ENCODE measurements at regions of chr4 and their contacts with region 1.

Region 1: GRCh38 chr4:83639849-83640493 is 104.1 kb downstream of the GPAT3 start:
- DNase-seq: peak; percentile 45 to 64 (median 60)
- H3K4me3 ChIP-seq: no peak overlapping the region
- H3K4me3 Mint-ChIP-seq: no peak overlapping the region
- H3K27ac ChIP-seq: no peak overlapping the region
- H3K27ac Mint-ChIP-seq: no peak overlapping the region
- H3K4me1 ChIP-seq: no peaks in the 10 kb centered on the region
- H3K4me1 Mint-ChIP-seq: peaks cover 0 to 3% (median 2%) of the 10 kb centered on the region in 4 donors
- H3K27me3 ChIP-seq: no peaks in the 10 kb centered on the region
- H3K27me3 Mint-ChIP-seq: peaks cover 6 to 8% of the 10 kb centered on the region in 2 donors

Region 2: DNA sequence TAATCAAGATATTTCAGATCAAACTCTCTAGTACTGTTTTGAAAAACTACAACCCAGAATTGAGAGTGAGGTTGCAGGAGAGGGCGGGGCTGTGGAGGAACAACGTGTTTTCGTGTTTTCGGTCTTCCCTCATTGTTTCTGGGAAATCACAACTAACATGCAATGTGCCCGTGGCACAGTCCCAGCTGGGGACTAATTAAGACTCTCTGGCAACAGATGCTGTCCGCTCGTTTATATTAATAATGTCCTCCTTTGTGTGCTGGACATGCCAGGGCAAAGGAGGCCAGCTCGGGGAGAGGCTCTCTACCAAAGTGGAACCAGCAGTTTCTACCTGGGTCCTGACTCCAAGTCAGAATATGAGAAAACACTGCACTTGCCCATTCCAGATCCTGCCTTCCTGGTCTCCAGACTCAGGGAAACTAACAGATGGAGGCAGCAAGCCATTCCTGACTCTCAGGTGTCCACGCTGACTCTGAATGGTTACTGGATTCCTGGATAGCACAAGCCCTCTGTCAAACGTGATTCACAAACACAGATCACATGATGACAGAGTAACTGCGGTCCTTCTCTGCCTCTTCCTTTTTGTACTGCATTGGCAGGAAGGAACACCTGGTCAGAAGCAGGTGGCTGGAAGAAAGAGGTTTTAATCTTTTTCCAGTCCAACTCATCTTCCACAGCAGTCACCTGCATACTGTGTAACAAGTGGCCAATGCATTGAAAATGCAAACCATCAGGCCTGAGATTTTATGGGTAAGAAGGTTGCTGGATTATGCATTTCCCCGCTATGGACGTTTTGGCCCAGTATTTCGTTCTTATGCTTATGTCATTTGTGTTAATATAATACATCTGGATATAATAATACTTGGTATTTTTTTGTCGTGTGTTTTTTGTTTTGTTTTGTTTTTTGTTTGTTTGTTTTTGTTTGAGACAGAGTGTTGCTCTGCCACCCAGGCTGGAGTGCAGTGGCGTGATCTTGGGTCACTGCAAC is 420.3 kb before region 1 on chr4:
- CTCF ChIA-PET with region 1: no interaction called
- POLR2A ChIA-PET with region 1: no interaction called
- intact Hi-C with region 1: no loop called
- DNase-seq: peak; percentile 47 to 56 (median 50)
- H3K4me3 ChIP-seq: peak overlapping the region in 1 of 2 donors; percentile 54
- H3K4me3 Mint-ChIP-seq: peak overlapping the region; percentile 63 to 88 (median 78)
- H3K27ac ChIP-seq: peak overlapping the region; percentile 64
- H3K27ac Mint-ChIP-seq: peak overlapping the region; percentile 77 to 94 (median 91)
- H3K4me1 ChIP-seq: peaks cover 81% of the 10 kb centered on the region
- H3K4me1 Mint-ChIP-seq: peaks cover 49 to 78% (median 64%) of the 10 kb centered on the region in 4 donors
- H3K27me3 ChIP-seq: no peaks in the 10 kb centered on the region
- H3K27me3 Mint-ChIP-seq: no peaks in the 10 kb centered on the region

Region 3: GRCh38 chr4:83362492-83363329 is 277.3 kb before region 1 on chr4:
- CTCF ChIA-PET with region 1: interaction called, 4 read pairs
- POLR2A ChIA-PET with region 1: no interaction called
- intact Hi-C with region 1: loop called (anchors 2 kb)
- DNase-seq: no peak
- H3K4me3 ChIP-seq: no peak overlapping the region
- H3K4me3 Mint-ChIP-seq: no peak overlapping the region
- H3K27ac ChIP-seq: no peak overlapping the region
- H3K27ac Mint-ChIP-seq: no peak overlapping the region
- H3K4me1 ChIP-seq: no peaks in the 10 kb centered on the region
- H3K4me1 Mint-ChIP-seq: no peaks in the 10 kb centered on the region
- H3K27me3 ChIP-seq: no peaks in the 10 kb centered on the region
- H3K27me3 Mint-ChIP-seq: peaks cover 0 to 2% of the 10 kb centered on the region in 2 donors

Region 4: GRCh38 chr4:83498187-83498586 is 141.8 kb before region 1 on chr4:
- CTCF ChIA-PET with region 1: interaction called, 96 read pairs
- POLR2A ChIA-PET with region 1: no interaction called
- intact Hi-C with region 1: no loop called
- DNase-seq: no peak
- H3K4me3 ChIP-seq: no peak overlapping the region
- H3K4me3 Mint-ChIP-seq: no peak overlapping the region
- H3K27ac ChIP-seq: no peak overlapping the region
- H3K27ac Mint-ChIP-seq: peak overlapping the region in 1 of 7 donors; percentile 69
- H3K4me1 ChIP-seq: no peaks in the 10 kb centered on the region
- H3K4me1 Mint-ChIP-seq: no peaks in the 10 kb centered on the region
- H3K27me3 ChIP-seq: no peaks in the 10 kb centered on the region
- H3K27me3 Mint-ChIP-seq: peaks cover 1 to 2% of the 10 kb centered on the region in 2 donors

Region 5: DNA sequence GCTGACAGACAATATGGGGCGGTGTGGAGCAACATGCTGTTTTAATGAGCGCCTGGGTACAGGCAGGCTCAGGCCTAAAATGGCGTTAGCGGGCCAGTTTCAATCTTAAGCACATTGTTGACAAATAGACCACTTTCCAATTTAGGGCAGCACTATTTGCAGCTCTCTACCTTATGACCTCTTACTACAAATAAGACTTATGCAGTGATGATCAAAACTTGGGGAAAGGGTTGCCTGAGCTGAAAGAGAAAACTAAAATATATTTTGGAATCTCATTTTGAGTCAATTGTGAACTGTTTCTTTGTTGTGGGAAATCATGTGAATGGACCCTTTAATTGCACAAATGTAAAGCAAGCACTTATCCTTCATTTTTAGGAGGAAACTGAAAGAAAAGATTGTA is 129.5 kb before region 1 on chr4:
- CTCF ChIA-PET with region 1: interaction called, 93 read pairs
- POLR2A ChIA-PET with region 1: no interaction called
- intact Hi-C with region 1: loop called (anchors 1 kb)
- DNase-seq: no peak
- H3K4me3 ChIP-seq: no peak overlapping the region
- H3K4me3 Mint-ChIP-seq: no peak overlapping the region
- H3K27ac ChIP-seq: no peak overlapping the region
- H3K27ac Mint-ChIP-seq: no peak overlapping the region
- H3K4me1 ChIP-seq: no peaks in the 10 kb centered on the region
- H3K4me1 Mint-ChIP-seq: peaks cover 0 to 3% (median 1%) of the 10 kb centered on the region in 4 donors
- H3K27me3 ChIP-seq: no peaks in the 10 kb centered on the region
- H3K27me3 Mint-ChIP-seq: no peaks in the 10 kb centered on the region

Region 6: GRCh38 chr4:83658806-83659495 is 19.0 kb after region 1 on chr4:
- CTCF ChIA-PET with region 1: interaction called, 14 read pairs
- POLR2A ChIA-PET with region 1: no interaction called
- intact Hi-C with region 1: no loop called
- DNase-seq: no peak
- H3K4me3 ChIP-seq: no peak overlapping the region
- H3K4me3 Mint-ChIP-seq: no peak overlapping the region
- H3K27ac ChIP-seq: no peak overlapping the region
- H3K27ac Mint-ChIP-seq: no peak overlapping the region
- H3K4me1 ChIP-seq: peaks cover 9% of the 10 kb centered on the region
- H3K4me1 Mint-ChIP-seq: peaks cover 8 to 15% (median 9%) of the 10 kb centered on the region in 4 donors
- H3K27me3 ChIP-seq: no peaks in the 10 kb centered on the region
- H3K27me3 Mint-ChIP-seq: peaks cover 0 to 5% of the 10 kb centered on the region in 2 donors